ENCODE measurements at regions of chr19 and their contacts with region 1.

Region 1: GRCh38 chr19:44626048-44626624 is 12.8 kb downstream of the IGSF23 start:
- DNase-seq: peak; percentile 89
- H3K4me3 ChIP-seq: no peak overlapping the region; the same call in 1 of the 2 replicates
- CTCF ChIP-seq: no peak

Region 2: DNA sequence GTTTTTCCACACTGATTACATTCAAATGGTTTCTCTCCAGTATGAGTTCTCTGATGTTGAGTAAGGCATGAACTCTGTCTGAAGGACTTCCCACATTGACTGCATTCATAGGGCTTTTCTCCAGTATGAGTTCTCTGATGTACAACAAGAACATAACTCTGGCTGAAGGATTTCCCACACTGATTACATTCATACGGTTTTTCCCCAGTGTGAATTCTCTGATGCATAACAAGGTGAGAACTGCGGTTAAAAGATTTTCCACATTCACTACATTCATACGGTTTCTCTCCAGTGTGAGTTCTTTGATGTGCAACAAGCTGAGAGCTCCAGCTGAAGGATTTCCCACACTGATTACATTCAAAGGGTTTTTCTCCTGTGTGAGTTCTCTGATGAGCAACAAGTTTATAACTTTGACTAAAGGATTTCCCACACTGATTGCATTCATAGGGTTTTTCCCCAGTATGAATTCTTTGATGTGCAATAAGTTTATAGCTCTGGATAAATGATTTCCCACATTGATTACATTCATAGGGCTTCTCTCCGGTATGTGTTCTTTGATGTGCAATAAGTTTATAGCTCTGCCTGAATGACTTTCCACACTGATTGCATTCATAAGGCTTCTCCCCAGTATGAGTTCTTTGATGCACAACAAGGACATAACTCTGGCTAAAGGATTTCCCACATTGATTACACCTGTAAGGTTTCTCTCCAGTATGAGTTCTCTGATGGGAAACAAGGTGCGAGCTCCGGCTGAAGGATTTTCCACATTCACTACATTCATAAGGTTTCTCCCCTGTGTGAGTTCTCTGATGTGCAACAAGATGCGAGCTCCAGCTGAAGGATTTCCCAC is 149.4 kb before region 1 on chr19:
- CTCF ChIA-PET with region 1: no interaction called
- POLR2A ChIA-PET with region 1: no interaction called
- DNase-seq: no peak
- H3K4me3 ChIP-seq: no peak overlapping the region
- CTCF ChIP-seq: no peak

Region 3: GRCh38 chr19:44615863-44616247 is 10.3 kb before region 1 on chr19:
- CTCF ChIA-PET with region 1: interaction called, 12 read pairs
- POLR2A ChIA-PET with region 1: no interaction called
- DNase-seq: no peak
- H3K4me3 ChIP-seq: no peak overlapping the region
- CTCF ChIP-seq: no peak

Region 4: DNA sequence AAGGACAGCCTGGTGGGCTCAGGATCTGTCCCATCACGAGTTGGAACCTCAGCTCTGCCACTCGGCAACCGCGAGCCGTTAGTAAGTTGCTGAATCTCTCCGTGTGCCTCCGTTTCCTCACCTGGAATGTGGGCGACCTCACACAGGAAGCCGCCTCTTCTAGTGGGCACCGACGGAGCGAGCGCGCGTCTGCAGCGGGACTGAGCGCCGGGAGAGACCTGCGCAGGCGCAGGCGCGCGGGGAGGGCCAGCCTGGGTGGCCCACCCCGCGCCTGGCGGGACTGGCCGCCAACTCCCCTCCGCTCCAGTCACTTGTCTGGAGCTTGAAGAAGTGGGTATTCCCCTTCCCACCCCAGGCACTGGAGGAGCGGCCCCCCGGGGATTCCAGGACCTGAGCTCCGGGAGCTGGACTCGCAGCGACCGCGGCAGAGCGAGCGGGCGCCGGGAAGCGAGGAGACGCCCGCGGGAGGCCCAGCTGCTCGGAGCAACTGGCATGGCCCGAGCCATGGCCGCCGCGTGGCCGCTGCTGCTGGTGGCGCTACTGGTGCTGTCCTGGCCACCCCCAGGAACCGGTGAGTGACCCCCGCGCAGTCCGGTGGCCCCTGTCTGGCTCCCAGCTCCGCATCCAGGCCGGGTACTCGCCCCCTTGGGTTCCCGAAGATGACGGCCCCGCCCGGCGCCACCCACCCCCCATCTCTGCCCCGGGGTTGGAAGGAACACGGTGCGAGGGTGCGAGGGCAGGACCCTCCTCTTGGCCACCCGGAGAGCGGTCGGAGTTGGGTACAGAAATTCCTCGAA is 17.7 kb after region 1 on chr19 and contains the start of gene PVR:
- CTCF ChIA-PET with region 1: interaction called, 3 read pairs
- POLR2A ChIA-PET with region 1: interaction called, 12 read pairs
- DNase-seq: no peak
- H3K4me3 ChIP-seq: peak within 1 kb of the TSS; percentile 90
- CTCF ChIP-seq: no peak

Measured in AG04449 (cell line).